Activated T-helper 2 cell treated with anti-CD3 and anti-CD28 coated beads, Interferon-gamma antibody, Interleukin-2, Interleukin-4, amounts not matched to agents 10 μg/mL and 5 μg/mL and 100 μg/mL, durations not matched to agents 14 hours and 24 hours and 36 hours (primary cell): ENCODE measurements at regions of chr2 and their contacts with region 1.

Region 1: GRCh38 chr2:45643543-45644542 is 7.6 kb upstream of the PRKCE start:
- DNase-seq: peak; percentile 59
- H3K4me3 Mint-ChIP-seq: peak overlapping the region; percentile 67
- H3K27ac Mint-ChIP-seq: no peak overlapping the region
- H3K4me1 Mint-ChIP-seq: peaks cover 15% of the 10 kb centered on the region
- H3K27me3 Mint-ChIP-seq: peaks cover 38% of the 10 kb centered on the region

Region 2: DNA sequence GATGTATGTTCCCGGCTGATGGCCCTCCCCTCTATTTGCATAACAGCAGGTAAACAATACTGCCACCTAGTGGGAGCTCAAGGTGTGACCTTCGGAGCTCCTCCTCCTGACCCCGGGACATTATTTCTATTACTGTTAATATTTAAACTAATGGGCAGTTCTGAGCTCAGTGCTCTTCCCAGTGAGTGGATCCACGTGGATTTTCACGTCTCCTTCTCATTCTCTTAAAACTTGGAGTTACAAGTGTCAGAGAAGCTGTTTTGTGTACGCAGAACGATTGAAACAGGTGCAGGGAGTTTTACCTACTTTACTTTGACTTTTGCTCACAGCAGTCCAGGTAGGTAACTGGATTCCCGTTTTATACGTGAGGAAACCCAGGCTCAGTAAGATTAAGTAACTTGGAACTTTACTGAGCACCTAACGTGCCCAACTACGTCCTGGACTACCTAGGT is 134.9 kb after region 1 on chr2:
- intact Hi-C with region 1: loop called (anchors 1 kb)
- DNase-seq: peak; percentile 41
- H3K4me3 Mint-ChIP-seq: no peak overlapping the region
- H3K27ac Mint-ChIP-seq: no peak overlapping the region
- H3K4me1 Mint-ChIP-seq: peaks cover 14% of the 10 kb centered on the region
- H3K27me3 Mint-ChIP-seq: no peaks in the 10 kb centered on the region